Activated CD4-positive, alpha-beta T cell treated with anti-CD3 and anti-CD28 coated beads, Interleukin-2, amount 10 ng/mL, durations not matched to agents 24 days and 14 days (primary cell): ENCODE measurements at regions of chr22 and their contacts with region 1.

Region 1: DNA sequence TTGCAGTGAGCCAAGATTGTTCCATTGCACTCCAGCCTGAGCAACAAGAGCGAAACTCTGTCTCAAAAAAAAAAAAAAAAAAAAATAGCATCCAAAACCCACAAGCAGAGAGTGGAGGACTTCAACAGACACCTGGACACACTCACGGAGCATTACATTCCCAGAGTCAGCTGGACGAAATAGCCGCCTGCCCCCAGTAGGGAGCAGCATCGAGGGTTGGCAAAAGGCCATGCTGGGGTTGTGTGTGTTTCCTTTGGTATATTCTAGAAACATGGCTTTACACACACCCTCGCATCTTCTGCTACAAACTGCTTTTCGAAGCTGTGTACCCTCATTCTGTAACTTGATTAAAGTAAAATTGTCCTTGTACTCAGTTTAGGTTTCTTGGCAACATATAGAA is 5.3 kb downstream of the ADA2 start:
- DNase-seq: peak; percentile 84
- H3K4me3 Mint-ChIP-seq: no peak overlapping the region
- H3K27ac Mint-ChIP-seq: no peak overlapping the region
- H3K4me1 Mint-ChIP-seq: peaks cover 27% of the 10 kb centered on the region
- H3K27me3 Mint-ChIP-seq: no peaks in the 10 kb centered on the region

Region 2: DNA sequence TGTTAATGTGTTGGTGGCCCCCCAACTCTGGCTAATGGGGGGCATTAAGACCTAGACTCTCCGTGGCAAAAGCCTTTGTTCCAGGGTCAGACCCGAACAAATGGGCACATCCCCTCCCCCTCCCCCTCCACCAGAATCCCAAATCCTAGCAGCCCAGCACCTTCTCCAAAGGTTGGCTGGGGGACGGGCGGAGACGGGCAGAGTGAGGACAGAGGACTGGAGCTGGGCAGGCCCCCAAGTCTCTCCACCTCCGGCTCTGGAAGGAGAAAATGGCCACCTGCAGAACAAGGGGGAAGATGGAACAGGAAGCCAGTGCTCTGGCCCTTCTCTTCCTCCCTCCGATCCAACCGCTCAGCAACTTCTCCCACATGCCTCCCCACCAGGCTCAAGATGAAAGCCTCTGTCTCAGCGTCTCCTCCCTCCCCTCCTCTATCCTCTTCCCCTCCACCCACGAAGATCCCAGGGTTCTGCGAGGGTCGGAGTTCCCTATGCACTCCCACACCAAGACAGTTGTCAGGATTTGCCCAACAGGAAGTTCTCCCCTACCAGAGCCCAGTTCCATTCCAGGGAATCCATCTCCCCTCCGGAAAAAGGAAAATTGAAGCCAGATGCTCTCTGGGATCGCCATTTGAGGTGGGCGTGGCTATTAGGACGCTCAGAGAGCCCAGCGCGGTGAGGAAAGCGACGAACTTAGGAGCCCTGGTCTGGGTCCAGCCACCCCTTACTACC is 14.8 kb before region 1 on chr22:
- intact Hi-C with region 1: no loop called
- DNase-seq: no peak
- H3K4me3 Mint-ChIP-seq: no peak overlapping the region
- H3K27ac Mint-ChIP-seq: no peak overlapping the region
- H3K4me1 Mint-ChIP-seq: peaks cover 3% of the 10 kb centered on the region
- H3K27me3 Mint-ChIP-seq: no peaks in the 10 kb centered on the region

Region 3: GRCh38 chr22:17243524-17243923 is 29.5 kb after region 1 on chr22:
- intact Hi-C with region 1: loop called (anchors 2 kb)
- DNase-seq: peak; percentile 79
- H3K4me3 Mint-ChIP-seq: no peak overlapping the region
- H3K27ac Mint-ChIP-seq: peak overlapping the region; percentile 87
- H3K4me1 Mint-ChIP-seq: peaks cover 24% of the 10 kb centered on the region
- H3K27me3 Mint-ChIP-seq: peaks cover 2% of the 10 kb centered on the region

Region 4: DNA sequence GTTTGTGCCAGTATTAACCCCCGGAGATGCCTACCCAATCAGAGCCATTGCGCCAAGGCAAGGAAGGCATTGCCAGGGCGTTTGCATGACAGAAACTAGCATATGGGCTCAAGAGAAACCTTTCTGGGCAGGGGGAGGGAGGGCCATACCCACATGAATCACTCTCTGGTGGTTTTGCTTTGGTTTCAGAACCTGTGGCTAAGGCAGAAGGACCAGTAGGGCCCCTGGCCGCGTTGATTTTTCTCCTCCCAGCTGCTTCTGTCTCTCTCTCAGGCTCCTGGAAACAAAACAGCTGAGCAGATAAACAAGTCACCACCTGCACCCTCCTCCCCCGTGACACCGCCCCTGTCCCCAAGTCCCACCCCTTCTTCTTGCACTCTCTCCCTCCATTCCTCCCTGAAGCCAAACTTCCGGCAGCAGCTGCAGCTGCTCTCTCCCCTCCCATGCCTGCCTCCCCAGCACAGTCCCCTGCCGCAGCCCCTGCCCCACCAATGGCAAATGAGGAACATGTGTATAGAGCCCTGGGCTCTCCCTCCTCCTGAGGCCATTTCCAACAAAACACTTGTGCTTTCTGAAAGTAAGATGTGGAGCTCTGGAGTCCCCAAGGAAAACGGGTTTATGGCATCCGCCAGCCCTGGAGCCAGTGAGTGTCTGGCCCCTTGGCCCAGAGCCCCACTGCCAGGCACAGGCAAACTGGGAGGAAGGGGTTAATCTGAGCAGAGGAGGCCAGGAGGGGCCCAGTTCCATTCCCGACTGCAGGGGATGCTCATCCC is 44.2 kb after region 1 on chr22:
- intact Hi-C with region 1: loop called (anchors 2 kb)
- DNase-seq: peak; percentile 92
- H3K4me3 Mint-ChIP-seq: peak overlapping the region; percentile 66
- H3K27ac Mint-ChIP-seq: peak overlapping the region; percentile 49
- H3K4me1 Mint-ChIP-seq: peaks cover 30% of the 10 kb centered on the region
- H3K27me3 Mint-ChIP-seq: peaks cover 1% of the 10 kb centered on the region

Region 5: GRCh38 chr22:17281440-17281841 is 67.5 kb after region 1 on chr22:
- intact Hi-C with region 1: loop called (anchors 1 kb)
- DNase-seq: peak; percentile 86
- H3K4me3 Mint-ChIP-seq: peak overlapping the region; percentile 69
- H3K27ac Mint-ChIP-seq: peak overlapping the region; percentile 95
- H3K4me1 Mint-ChIP-seq: peaks cover 32% of the 10 kb centered on the region
- H3K27me3 Mint-ChIP-seq: peaks cover 14% of the 10 kb centered on the region

Region 6: GRCh38 chr22:17303840-17304779 is 90.1 kb after region 1 on chr22:
- intact Hi-C with region 1: loop called (anchors 2 kb)
- DNase-seq: peak; percentile 94
- H3K4me3 Mint-ChIP-seq: peak overlapping the region; percentile 75
- H3K27ac Mint-ChIP-seq: peak overlapping the region; percentile 90
- H3K4me1 Mint-ChIP-seq: peaks cover 41% of the 10 kb centered on the region
- H3K27me3 Mint-ChIP-seq: no peaks in the 10 kb centered on the region

Region 7: DNA sequence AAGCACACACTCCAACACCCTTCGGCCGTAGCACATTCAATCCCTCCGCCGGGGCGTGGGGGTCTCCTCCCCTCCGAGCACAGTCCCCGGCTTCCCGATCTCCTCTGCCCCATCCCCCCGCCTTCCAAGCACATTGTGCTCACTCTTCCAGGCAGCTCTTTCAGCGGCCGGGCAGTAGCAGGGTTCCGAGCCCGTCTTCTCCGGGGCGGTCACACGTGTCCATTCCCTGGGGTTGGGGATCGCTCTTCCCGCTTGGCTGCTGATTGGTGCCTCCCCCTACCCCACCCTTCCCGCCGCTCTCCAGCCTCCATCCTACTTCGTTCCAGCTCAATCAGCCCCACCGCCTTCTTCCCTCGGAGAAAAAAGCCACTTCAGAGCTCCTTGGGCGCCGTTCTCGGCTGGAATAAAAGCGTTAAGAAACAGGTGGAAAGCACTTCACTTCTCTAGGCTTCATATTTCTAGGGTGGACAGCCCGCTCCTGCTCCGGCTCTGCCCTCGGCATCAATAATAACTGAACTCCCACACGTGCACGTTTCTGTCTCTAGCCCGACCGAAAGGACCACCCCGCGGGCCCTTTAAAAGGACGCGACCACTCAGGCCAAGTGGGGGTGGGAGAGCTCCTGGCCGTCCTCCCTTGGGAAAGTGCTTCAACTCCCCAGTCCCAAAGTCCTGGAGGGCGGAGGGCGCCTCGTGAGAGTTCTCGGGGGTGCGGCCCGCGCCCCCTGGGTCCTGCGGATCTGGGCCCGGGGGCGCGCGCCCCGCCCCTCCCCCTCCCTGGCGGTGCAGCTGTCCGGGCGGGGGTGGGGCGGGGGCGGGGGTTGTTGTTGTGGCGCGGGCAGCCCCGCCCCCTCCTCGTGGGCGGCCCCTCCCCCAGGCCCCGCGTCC is 154.8 kb after region 1 on chr22:
- intact Hi-C with region 1: loop called (anchors 2 kb)
- DNase-seq: peak; percentile 68
- H3K4me3 Mint-ChIP-seq: peak overlapping the region; percentile 81
- H3K27ac Mint-ChIP-seq: peak overlapping the region; percentile 11
- H3K4me1 Mint-ChIP-seq: peaks cover 21% of the 10 kb centered on the region
- H3K27me3 Mint-ChIP-seq: peaks cover 61% of the 10 kb centered on the region